ENCODE measurements at regions of chr12 and their contacts with region 1.

Region 1: DNA sequence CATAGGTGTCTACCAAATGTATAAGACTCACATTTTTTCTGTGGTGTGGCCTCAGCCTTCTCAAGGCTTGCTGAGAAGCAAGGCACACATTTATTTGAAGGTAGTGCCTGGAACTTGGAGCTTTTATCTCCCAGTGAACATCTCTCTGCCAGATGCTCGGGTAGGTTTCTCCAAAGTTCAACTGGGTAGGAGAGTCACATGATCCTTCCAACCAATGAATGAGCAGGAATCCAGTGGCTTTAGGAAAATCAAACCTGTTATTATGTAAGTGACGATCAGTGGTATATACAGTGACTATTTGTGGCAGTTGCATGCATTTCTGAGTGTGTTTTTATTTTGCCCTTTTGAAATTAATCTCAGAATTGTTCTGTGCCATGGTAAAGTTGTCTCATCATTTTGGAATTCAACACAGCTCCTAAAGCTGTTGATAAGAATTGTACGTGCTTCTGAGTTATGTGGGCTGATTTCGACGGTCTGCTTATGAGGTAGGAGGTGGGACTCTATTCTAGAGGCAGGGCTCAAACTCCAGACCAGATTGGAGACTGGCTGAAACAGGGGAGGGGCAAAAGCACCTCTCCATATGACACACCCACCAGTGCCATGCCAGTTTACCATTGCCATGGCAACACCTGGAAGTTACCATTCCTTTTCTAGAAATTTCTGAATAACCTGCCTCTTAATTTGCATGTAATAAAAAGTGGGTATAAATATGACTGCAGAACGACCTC is 57.6 kb downstream of the EID3 start:
- DNase-seq: no peak

Region 2: DNA sequence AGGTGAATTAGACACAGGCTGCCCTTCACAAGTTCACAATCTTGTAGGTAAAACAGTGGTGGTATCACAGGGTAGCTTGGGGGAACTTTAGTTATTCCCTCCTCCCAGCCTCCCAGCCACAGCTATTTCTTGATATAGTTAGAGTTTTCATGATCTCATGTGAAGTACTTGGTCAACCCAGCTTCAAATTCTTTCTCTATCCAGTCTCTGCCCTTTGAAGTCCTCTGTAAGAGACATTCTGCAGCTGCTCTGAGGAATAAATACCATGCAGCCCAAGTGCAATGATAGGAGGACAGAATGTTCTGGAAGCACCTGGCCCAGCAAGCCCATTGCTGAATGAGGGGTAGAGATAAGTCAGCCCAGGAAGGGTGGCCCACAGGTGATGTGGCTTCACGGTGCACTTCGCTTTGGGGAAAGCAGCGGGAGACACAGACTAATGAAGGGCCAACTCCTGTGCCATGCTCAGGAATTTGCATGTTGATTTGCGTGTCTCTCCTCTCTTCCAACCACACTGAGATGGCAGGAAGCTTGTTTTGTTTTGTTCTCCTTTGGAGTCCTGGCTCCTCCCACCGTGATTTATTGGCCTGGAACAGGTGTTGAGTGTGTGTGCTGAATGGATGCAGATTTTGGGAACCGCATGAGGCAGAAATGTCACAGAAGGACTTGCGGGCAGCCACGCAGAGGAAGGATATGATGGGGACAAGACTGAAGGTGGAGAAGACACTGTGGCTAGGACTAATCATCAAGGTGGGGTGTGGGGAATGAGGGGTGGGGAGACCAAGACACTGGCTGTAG is 153.5 kb before region 1 on chr12:
- intact Hi-C with region 1: loop called (anchors 2 kb)
- DNase-seq: no peak

Region 3: DNA sequence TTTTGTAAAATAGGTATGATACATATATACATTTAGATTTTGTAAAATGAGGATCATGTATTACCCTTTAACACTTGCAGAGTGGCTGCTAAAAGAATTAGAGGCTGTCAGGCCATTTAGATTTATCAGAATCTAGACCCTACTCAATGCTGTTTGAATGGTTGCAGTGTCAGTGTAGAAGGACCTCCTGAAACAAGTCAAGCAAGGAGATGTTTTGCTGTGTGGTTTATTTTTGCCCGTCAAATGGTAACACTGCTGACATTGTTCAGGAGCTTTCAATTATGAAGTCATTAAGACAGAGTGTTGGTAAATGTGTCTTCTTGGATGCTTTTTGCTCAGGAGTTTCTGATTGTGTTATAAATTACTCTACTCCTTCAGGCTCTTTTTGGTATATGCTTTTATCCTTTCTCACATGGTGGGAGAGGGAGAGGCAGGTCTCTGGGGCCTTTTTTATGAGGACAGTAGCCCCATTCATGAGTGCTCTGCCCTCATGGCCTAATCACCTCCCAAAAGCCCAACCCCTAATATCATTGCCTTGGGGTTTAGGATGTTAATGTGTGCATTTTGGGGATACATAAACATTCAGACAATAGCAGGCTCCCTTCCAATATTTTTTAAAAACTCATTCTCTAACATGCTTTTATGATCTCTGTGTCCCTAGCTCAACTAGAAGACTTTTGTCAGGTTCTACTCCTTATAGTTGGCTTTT is 41.1 kb before region 1 on chr12:
- intact Hi-C with region 1: no loop called
- DNase-seq: no peak

Region 4: DNA sequence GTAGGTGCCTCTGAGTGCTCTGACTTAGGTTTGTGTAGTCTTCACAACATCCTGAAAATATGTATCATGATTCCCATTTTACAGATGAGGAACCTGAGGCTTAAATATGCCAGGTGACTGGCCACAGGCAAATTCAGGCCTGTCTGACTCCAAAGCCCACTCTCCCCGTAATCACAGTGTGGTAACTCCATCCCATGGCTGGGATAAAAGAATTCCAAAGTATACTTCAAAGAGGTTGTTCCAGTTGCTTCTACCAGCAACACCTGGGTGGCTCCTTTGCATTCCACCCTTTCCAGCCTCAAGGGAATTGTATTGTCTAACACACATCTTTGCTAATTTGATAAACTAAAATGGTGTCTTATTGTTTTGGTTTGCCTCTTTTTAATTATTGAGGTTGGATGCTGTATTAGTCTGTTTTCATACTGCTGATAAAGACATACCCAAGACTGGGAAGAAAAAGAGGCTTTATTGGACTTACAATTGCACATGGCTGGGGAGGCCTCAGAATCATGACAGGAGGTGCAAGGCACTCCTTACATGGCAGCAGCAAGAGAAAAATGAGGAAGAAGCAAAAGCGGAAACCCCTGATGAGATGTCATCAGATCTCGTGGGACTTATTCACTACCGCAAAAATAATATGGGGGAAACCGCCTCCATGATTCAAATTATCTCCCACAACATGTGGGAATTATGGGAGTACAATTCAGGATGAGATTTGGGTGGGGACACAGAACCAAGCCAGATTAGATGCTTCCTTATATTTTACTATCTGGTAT is 85.7 kb after region 1 on chr12:
- intact Hi-C with region 1: no loop called
- DNase-seq: no peak

Region 5: GRCh38 chr12:104604070-104604994 is 243.2 kb after region 1 on chr12:
- intact Hi-C with region 1: no loop called
- DNase-seq: peak; percentile 87

Region 6: DNA sequence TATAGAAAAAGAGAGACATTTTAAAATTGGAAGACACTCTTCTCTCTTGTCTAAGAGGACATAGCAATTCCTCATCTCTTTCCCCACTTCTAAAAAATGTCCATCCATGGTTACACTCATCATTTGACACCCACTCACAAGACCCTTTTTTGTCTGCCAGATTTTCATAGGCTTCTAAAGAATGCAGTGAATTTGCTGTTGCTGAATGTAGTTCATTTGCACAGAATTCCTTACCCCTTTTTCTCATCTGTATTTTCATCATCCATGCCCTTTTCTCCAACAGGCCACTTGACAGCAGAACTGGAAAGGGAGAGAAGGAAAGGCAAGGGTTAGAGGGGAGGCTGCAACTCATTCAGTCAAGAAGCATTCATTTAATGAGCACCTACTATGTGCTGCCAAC is 1649.6 kb after region 1 on chr12:
- intact Hi-C with region 1: no loop called
- DNase-seq: no peak

Measured in cardiac septum (tissue), 1 donor.